Activated CD4-positive, alpha-beta T cell treated with anti-CD3 and anti-CD28 coated beads for 36 hours (primary cell): ENCODE measurements at regions of chrX and their contacts with region 1.

Region 1: DNA sequence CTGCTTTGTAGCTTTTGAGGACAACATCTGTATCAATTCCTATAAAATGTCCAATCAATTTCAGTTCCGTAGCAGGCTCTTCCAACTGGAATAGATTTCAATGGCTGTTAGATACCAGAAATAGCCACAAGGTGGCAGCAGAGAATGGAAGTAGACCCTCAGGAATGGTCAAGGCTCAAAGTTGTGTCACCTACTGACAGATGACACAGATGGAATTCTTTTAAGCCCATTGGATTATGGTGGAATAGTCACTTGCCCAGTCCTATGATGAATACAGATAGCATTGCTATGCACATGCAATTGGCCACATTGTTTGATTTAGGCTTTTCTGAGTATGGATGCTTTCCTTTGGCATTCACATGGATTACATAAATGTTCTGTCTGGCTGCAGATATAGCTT is 130.4 kb upstream of the RADX start:
- DNase-seq: peak; percentile 36
- ATAC-seq: no peak
- H3K4me3 Mint-ChIP-seq: no peak overlapping the region
- H3K27ac Mint-ChIP-seq: no peak overlapping the region
- H3K4me1 Mint-ChIP-seq: peaks cover 24% of the 10 kb centered on the region
- H3K27me3 Mint-ChIP-seq: no peaks in the 10 kb centered on the region

Region 2: DNA sequence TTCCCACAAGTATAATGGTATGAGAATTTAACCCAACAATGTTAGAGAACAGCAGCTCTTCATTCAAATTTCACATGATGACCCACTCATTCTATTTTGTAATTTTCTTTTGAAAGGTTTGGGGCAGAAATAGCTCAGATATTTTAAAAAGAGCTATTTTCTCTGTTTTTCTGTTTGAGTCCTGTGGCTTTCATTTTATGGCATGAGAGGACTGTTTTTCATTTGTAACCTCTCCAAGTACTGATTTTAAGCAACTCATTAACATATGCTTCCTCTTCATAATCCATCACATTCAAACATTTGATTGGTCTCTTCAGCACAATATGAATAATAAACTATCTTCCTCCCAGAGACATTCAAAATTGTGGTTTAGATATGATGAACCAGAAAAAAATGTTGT is 1131.9 kb before region 1 on chrX:
- CTCF ChIA-PET with region 1: no interaction called
- POLR2A ChIA-PET with region 1: no interaction called
- intact Hi-C with region 1: no loop called
- DNase-seq: no peak
- ATAC-seq: no peak
- H3K4me3 Mint-ChIP-seq: no peak overlapping the region
- H3K27ac Mint-ChIP-seq: no peak overlapping the region
- H3K4me1 Mint-ChIP-seq: no peaks in the 10 kb centered on the region
- H3K27me3 Mint-ChIP-seq: no peaks in the 10 kb centered on the region

Region 3: DNA sequence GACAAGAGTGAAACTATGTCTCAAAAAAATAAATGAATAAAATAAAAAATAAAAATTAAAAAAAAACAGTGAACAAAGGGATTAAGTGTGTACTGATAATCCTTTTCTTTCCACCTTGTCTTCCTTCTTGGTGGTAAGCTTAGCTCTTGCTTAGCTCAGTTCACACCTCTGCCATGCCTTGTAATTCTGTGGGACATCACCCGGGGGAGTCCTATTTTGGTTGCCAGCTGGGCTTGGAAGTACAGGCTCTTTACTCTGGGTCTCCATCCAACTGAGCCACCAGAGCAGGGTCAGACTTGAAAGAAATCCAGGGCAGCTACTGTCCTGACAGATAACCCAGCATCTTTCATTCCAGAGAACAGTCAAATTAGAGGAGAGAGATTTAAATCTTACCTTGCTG is 1056.6 kb before region 1 on chrX:
- CTCF ChIA-PET with region 1: no interaction called
- POLR2A ChIA-PET with region 1: no interaction called
- intact Hi-C with region 1: no loop called
- DNase-seq: no peak
- ATAC-seq: no peak
- H3K4me3 Mint-ChIP-seq: no peak overlapping the region
- H3K27ac Mint-ChIP-seq: no peak overlapping the region
- H3K4me1 Mint-ChIP-seq: no peaks in the 10 kb centered on the region
- H3K27me3 Mint-ChIP-seq: no peaks in the 10 kb centered on the region

Region 4: GRCh38 chrX:106378616-106379015 is 102.7 kb before region 1 on chrX:
- CTCF ChIA-PET with region 1: no interaction called
- POLR2A ChIA-PET with region 1: no interaction called
- intact Hi-C with region 1: no loop called
- DNase-seq: no peak
- ATAC-seq: peak; percentile 33
- H3K4me3 Mint-ChIP-seq: no peak overlapping the region
- H3K27ac Mint-ChIP-seq: no peak overlapping the region
- H3K4me1 Mint-ChIP-seq: peaks cover 2% of the 10 kb centered on the region
- H3K27me3 Mint-ChIP-seq: no peaks in the 10 kb centered on the region

Region 5: DNA sequence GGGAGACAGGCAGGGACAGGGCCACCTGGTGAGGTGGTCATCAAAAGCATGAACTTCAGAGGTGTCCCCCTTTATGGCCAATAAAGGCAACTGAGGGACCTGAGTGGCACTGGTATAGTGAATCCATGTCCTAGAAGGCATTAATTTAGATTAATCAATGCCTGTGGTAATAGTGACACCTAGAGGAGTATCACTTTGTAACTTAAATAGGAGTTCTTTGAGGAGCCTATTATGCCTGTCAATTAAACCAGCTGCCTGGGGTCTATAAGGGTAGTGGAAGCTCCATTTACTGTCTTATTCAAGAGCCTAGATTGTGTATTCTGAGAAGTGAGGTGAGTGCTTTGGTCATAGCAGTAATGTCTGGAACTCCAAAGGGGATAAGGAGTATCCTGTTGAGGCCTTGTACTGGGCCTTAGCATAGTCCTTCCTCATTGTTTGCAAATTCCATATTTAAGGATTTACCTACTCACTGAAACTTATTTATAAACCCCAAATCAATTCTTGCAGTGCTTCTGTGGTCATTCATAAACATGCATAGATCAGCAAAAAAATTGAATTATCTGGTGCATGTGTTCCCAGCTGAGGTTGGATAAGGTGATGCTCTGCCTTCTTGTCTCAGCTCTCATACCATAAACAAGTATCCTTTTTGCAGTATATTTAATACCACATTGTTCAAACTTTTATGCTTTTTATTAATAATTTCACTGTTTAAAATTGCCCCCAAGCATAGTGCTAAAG is 83.4 kb before region 1 on chrX:
- CTCF ChIA-PET with region 1: no interaction called
- POLR2A ChIA-PET with region 1: no interaction called
- intact Hi-C with region 1: no loop called
- DNase-seq: no peak
- ATAC-seq: no peak
- H3K4me3 Mint-ChIP-seq: no peak overlapping the region
- H3K27ac Mint-ChIP-seq: no peak overlapping the region
- H3K4me1 Mint-ChIP-seq: no peaks in the 10 kb centered on the region
- H3K27me3 Mint-ChIP-seq: no peaks in the 10 kb centered on the region

Region 6: DNA sequence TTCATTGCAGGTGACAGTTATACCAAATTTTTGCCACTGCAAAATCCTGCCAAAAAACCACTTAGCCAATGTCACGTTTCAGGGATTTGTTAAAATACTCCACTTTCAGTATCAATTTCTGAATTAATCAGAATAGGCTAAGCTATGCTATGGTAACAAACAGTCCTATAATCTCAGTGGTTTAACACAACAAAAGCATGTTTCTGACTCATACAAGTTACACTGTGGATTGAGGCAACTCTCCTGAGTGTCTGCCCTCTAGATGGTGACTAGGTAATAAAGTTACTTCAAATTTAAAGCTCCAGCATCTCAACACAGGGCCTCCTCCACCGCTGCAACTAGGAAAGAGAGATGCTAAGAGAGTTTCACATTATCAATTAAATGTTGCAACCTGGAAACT is 107.5 kb after region 1 on chrX:
- CTCF ChIA-PET with region 1: no interaction called
- POLR2A ChIA-PET with region 1: no interaction called
- intact Hi-C with region 1: loop called in 1 of 2 experiments (anchors 1 kb)
- DNase-seq: no peak
- ATAC-seq: peak; percentile 90
- H3K4me3 Mint-ChIP-seq: no peak overlapping the region
- H3K27ac Mint-ChIP-seq: no peak overlapping the region
- H3K4me1 Mint-ChIP-seq: peaks cover 4% of the 10 kb centered on the region
- H3K27me3 Mint-ChIP-seq: peaks cover 2% of the 10 kb centered on the region

Region 7: DNA sequence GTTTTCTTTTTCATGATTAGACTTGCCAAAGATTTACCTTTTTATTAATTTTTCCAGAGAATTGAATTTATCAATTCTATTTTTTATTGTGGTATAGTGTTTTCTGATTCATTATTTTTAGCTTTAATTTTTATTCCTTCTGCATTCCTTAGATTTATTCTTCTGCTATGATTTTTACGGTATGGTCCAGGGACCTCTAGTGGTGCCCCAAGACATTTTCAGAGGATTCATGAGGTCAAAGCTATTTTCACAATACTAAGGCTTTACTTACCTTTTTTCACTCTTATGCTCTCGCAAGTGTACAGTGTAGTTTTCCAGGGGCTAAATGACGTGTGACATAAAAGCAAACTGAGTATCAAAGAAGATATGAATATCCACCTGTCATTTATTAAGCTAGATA is 138.5 kb after region 1 on chrX:
- CTCF ChIA-PET with region 1: interaction called, 5 read pairs
- POLR2A ChIA-PET with region 1: no interaction called
- intact Hi-C with region 1: loop called in 1 of 2 experiments (anchors 2 kb)
- DNase-seq: no peak
- ATAC-seq: no peak
- H3K4me3 Mint-ChIP-seq: no peak overlapping the region
- H3K27ac Mint-ChIP-seq: no peak overlapping the region
- H3K4me1 Mint-ChIP-seq: no peaks in the 10 kb centered on the region
- H3K27me3 Mint-ChIP-seq: no peaks in the 10 kb centered on the region

Region 8: GRCh38 chrX:106726485-106727437 is 245.4 kb after region 1 on chrX and contains the start of gene RNF128:
- CTCF ChIA-PET with region 1: no interaction called
- POLR2A ChIA-PET with region 1: no interaction called
- intact Hi-C with region 1: loop called in 1 of 2 experiments (anchors 10 kb)
- DNase-seq: peak; percentile 39
- ATAC-seq: peak; percentile 75
- H3K4me3 Mint-ChIP-seq: peak within 1 kb of the TSS; percentile 57
- H3K27ac Mint-ChIP-seq: no peak within 1 kb of the TSS
- H3K4me1 Mint-ChIP-seq: peaks cover 3% of the 10 kb centered on the region
- H3K27me3 Mint-ChIP-seq: peaks cover 32% of the 10 kb centered on the region
- total RNA-seq, gene RNF128: not detected

Region 9: DNA sequence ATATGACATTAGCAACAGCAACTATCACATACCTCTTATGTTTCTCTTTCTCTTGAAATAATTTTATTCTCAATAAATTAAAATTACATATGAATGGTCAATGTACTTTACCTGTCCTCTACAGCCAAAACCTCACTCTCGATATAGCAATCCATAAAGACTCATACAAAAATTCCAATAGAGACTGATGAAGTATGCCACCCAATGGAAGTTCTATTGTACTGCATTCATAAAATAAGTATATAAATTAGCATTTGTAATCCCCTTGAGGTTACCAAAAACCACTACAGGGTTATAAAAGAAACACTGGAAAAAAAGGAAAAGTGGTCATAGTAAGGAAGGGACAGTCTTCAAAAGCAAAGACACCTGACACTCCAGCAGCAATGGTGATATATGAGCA is 471.6 kb after region 1 on chrX:
- CTCF ChIA-PET with region 1: no interaction called
- POLR2A ChIA-PET with region 1: no interaction called
- intact Hi-C with region 1: loop called in 1 of 2 experiments (anchors 5 kb)
- DNase-seq: no peak
- ATAC-seq: no peak
- H3K4me3 Mint-ChIP-seq: no peak overlapping the region
- H3K27ac Mint-ChIP-seq: no peak overlapping the region
- H3K4me1 Mint-ChIP-seq: no peaks in the 10 kb centered on the region
- H3K27me3 Mint-ChIP-seq: no peaks in the 10 kb centered on the region